ENCODE measurements at regions of chr6 and their contacts with region 1.

Region 1: GRCh38 chr6:12875051-12875450 is 158.5 kb downstream of the PHACTR1 start:
- DNase-seq: no peak
- H3K4me3 ChIP-seq: no peak overlapping the region
- H3K27ac ChIP-seq: no peak overlapping the region
- H3K4me1 ChIP-seq: no peaks in the 10 kb centered on the region
- H3K27me3 ChIP-seq: no peaks in the 10 kb centered on the region
- CTCF ChIP-seq: no peak
- POLR2A ChIP-seq: no peak

Region 2: GRCh38 chr6:12060780-12061619 is 814.1 kb before region 1 on chr6:
- intact Hi-C with region 1: no loop called
- DNase-seq: peak; percentile 38 to 51
- H3K4me3 ChIP-seq: no peak overlapping the region
- H3K27ac ChIP-seq: no peak overlapping the region
- H3K4me1 ChIP-seq: no peaks in the 10 kb centered on the region
- H3K27me3 ChIP-seq: no peaks in the 10 kb centered on the region
- CTCF ChIP-seq: no peak
- POLR2A ChIP-seq: no peak

Region 3: DNA sequence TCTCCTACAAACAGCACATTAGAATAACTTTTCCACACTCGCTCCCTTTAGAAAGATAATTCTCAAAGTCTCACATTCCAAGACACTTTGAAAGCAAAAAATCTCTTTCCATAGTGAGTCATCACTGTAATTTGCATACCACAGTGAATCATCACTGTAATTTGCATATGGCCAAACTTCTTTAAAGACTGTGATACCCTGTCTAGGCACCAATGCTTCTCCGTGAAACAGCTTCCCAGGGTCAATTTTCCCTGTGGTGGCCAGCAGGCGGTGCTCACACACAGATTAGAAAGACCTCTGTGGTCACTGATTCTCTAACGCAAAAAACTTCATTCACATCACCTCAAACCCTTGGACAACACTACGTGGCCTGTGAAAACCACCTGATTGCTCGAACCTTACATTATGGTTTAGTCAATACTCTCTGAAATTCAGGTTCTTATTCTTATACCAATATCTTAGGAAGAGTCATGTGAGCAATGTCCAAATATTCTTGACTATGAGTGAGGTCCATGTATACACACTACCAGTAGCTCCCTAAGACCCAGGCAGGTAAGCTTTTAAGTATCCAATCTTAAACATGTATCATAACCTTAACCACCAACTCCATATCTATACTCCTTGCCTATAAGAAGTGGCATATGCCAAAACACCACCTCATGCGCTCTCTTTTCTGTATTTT is 236.9 kb before region 1 on chr6:
- intact Hi-C with region 1: no loop called
- DNase-seq: peak in 1 of 2 donors; percentile 13
- H3K4me3 ChIP-seq: no peak overlapping the region
- H3K27ac ChIP-seq: no peak overlapping the region
- H3K4me1 ChIP-seq: no peaks in the 10 kb centered on the region
- H3K27me3 ChIP-seq: no peaks in the 10 kb centered on the region
- CTCF ChIP-seq: peak; percentile 6 to 26 (median 14)
- POLR2A ChIP-seq: no peak

Region 4: DNA sequence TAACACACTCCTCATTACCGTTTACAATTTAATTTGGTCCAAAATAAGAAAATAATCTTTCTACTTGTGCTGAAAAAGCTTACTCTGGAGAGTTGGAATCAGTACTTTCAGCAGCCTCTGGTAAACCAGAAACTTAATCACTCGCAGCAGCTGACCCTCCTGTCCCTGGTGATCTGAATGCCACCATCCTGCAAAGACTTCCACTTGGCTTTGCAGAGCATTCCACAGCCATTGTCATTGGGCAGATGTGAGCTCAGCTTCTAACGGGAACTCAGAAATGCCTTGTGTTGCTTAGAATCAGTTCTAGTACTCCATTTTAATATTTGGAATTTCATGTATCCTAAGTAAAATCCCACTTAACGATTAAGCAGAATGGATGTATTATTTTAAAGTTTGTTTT is 98.8 kb before region 1 on chr6:
- intact Hi-C with region 1: loop called (anchors 5 kb)
- DNase-seq: no peak
- H3K4me3 ChIP-seq: no peak overlapping the region
- H3K27ac ChIP-seq: no peak overlapping the region
- H3K4me1 ChIP-seq: no peaks in the 10 kb centered on the region
- H3K27me3 ChIP-seq: no peaks in the 10 kb centered on the region
- CTCF ChIP-seq: no peak
- POLR2A ChIP-seq: no peak

Region 5: GRCh38 chr6:13336553-13336952 is 461.5 kb after region 1 on chr6:
- intact Hi-C with region 1: no loop called
- DNase-seq: peak; percentile 66 to 83
- H3K4me3 ChIP-seq: no peak overlapping the region
- H3K27ac ChIP-seq: no peak overlapping the region
- H3K4me1 ChIP-seq: no peaks in the 10 kb centered on the region
- H3K27me3 ChIP-seq: no peaks in the 10 kb centered on the region
- CTCF ChIP-seq: peak; percentile 72 to 90 (median 88)
- POLR2A ChIP-seq: no peak

Measured in uterus (tissue), 4 donors.